ENCODE measurements at regions of chr17 and their contacts with region 1.

Region 1: GRCh38 chr17:31740611-31741082 is 118.4 kb downstream of the COPRS start:
- DNase-seq: no peak
- H3K4me3 ChIP-seq: no peak overlapping the region
- H3K27ac ChIP-seq: peak overlapping the region; percentile 71 to 82 (median 76)
- H3K4me1 ChIP-seq: peaks cover 0 to 85% (median 71%) of the 10 kb centered on the region in 4 donors
- H3K27me3 ChIP-seq: no peaks in the 10 kb centered on the region
- CTCF ChIP-seq: no peak
- EP300 ChIP-seq: no peak
- POLR2A ChIP-seq: no peak

Region 2: GRCh38 chr17:31130286-31131224 is 610.1 kb before region 1 on chr17:
- intact Hi-C with region 1: no loop called
- DNase-seq: no peak
- H3K4me3 ChIP-seq: no peak overlapping the region
- H3K27ac ChIP-seq: no peak overlapping the region
- H3K4me1 ChIP-seq: peaks cover 0 to 8% (median 0%) of the 10 kb centered on the region in 4 donors
- H3K27me3 ChIP-seq: no peaks in the 10 kb centered on the region
- CTCF ChIP-seq: no peak
- EP300 ChIP-seq: no peak
- POLR2A ChIP-seq: no peak

Region 3: GRCh38 chr17:31581022-31581490 is 159.6 kb before region 1 on chr17:
- intact Hi-C with region 1: loop called (anchors 5 kb)
- DNase-seq: peak; percentile 92
- H3K4me3 ChIP-seq: peak overlapping the region in 2 of 4 donors; percentile 10 to 16
- H3K27ac ChIP-seq: peak overlapping the region; percentile 79 to 89 (median 84)
- H3K4me1 ChIP-seq: peaks cover 0 to 71% (median 55%) of the 10 kb centered on the region in 4 donors
- H3K27me3 ChIP-seq: no peaks in the 10 kb centered on the region
- CTCF ChIP-seq: no peak
- EP300 ChIP-seq: no peak
- POLR2A ChIP-seq: no peak

Region 4: GRCh38 chr17:31696184-31696602 is 44.5 kb before region 1 on chr17:
- intact Hi-C with region 1: loop called (anchors 2 kb)
- DNase-seq: peak; percentile 96
- H3K4me3 ChIP-seq: no peak overlapping the region
- H3K27ac ChIP-seq: peak overlapping the region; percentile 81 to 86 (median 83)
- H3K4me1 ChIP-seq: peaks cover 0 to 84% (median 73%) of the 10 kb centered on the region in 4 donors
- H3K27me3 ChIP-seq: no peaks in the 10 kb centered on the region
- CTCF ChIP-seq: peak in 1 of 4 experiments; percentile 30
- EP300 ChIP-seq: peak in 3 of 4 donors; percentile 78 to 89 (median 80)
- POLR2A ChIP-seq: no peak

Region 5: GRCh38 chr17:31787857-31788570 is 47.4 kb after region 1 on chr17:
- intact Hi-C with region 1: loop called (anchors 5 kb)
- DNase-seq: peak; percentile 93
- H3K4me3 ChIP-seq: no peak overlapping the region
- H3K27ac ChIP-seq: peak overlapping the region; percentile 79 to 84 (median 83)
- H3K4me1 ChIP-seq: peaks cover 0 to 13% (median 12%) of the 10 kb centered on the region in 4 donors
- H3K27me3 ChIP-seq: no peaks in the 10 kb centered on the region
- CTCF ChIP-seq: no peak
- EP300 ChIP-seq: peak in 1 of 4 donors; percentile 15
- POLR2A ChIP-seq: no peak

Measured in sigmoid colon (tissue), 7 donors.